ENCODE measurements at regions of chr2 and their contacts with region 1.

Region 1: GRCh38 chr2:107760620-107761364 is 65.9 kb upstream of the RGPD4 start:
- DNase-seq: no peak
- ATAC-seq: no peak
- H3K4me3 ChIP-seq: no peak overlapping the region
- H3K27ac ChIP-seq: no peak overlapping the region
- H3K4me1 ChIP-seq: no peaks in the 10 kb centered on the region
- H3K27me3 ChIP-seq: peaks cover 0 to 5% (median 0%) of the 10 kb centered on the region in 7 donors
- CTCF ChIP-seq: no peak

Region 2: DNA sequence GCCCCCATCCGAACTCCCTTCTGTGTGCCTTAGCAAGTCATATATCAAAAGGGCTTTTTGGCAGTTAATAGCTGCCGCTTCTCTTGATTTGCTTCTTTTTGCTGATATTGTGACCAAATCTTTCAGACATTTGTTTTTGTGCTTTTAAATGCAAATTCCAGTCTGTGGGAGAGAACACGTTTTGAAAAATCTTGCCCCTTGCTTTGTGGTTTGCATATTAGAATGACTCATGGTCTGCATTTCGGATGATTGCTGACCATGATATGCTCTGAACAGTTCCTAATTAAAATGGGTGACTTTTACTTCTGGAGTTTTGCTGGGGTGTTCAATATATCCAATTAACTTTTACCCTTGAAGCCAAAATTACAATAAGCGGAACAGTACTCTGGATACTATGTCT is 816.6 kb before region 1 on chr2:
- intact Hi-C with region 1: loop called in 1 of 10 experiments (anchors 5 kb)
- DNase-seq: no peak
- ATAC-seq: no peak
- H3K4me3 ChIP-seq: no peak overlapping the region
- H3K27ac ChIP-seq: no peak overlapping the region
- H3K4me1 ChIP-seq: no peaks in the 10 kb centered on the region
- H3K27me3 ChIP-seq: no peaks in the 10 kb centered on the region
- CTCF ChIP-seq: no peak

Region 3: DNA sequence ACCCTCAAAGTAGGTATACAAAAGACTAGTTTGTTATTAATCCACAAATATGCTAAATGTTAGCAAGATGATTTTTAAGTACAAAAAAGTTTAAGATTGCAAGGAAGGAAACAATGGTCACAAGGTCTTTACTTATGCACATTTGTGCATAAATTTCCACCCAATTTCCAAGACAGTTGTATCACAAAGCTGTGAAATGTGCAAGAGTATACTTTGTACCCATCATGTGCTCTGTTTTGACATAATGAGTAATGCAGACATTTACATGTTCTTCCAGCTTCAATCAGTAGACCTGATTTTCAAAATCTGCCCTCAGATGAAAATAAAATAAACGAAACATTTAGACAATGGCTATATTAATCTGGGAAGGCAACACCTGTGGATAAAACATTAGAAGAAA is 252.5 kb after region 1 on chr2:
- intact Hi-C with region 1: no loop called
- DNase-seq: no peak
- ATAC-seq: no peak
- H3K4me3 ChIP-seq: no peak overlapping the region
- H3K27ac ChIP-seq: no peak overlapping the region
- H3K4me1 ChIP-seq: no peaks in the 10 kb centered on the region
- H3K27me3 ChIP-seq: no peaks in the 10 kb centered on the region
- CTCF ChIP-seq: no peak

Measured in heart right ventricle (tissue), 16 donors.